Gastrocnemius medialis (tissue), 4 donors: ENCODE measurements at regions of chr10 and their contacts with region 1.

Region 1: DNA sequence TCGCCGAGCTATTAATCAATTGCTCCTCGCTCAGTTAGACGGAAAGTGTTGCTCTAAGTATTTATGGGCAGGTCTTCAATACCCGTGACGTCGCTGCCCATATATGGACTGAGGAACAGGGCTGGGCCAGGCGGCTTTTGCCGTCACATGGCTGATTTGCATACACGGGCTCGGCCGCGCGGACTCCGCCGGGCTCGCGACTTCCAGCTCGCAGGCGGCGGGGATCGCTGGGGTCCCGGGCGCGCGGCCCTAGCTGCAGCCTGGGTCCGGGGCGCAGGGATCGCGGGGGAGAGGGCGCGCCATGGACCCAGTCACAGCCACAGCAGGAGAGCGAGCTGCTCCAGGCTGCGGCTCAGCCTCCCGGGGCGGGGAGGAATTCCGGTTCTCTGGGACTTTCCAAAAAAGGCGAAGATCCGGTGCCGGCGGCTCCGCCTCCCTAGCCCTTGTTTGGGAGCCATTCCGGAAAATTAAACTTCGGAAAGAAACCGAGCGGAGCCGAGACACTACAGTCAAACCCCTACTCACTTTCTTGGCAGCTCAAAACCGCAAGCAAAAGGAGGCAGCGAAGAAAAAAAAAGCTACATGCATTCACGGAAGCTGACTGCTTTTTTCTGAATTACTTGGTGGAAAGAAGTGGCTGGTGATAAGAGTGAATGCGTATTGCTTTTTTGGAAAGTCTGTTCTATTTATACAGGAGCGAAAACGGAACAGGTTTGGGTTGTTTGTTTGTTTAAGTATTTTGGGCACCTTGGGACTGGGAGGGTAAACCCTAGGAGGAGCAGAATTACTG is at the start of gene EGR2:
- DNase-seq: peak; percentile 86 to 89
- ATAC-seq: peak; percentile 88 to 89
- H3K4me3 ChIP-seq: peak within 1 kb of the TSS; percentile 76 to 99 (median 92)
- H3K27ac ChIP-seq: peak within 1 kb of the TSS; percentile 86 to 94 (median 87)
- H3K4me1 ChIP-seq: peaks cover 15 to 32% of the 10 kb centered on the region in 2 donors
- H3K27me3 ChIP-seq: peaks cover 24 to 25% (median 24%) of the 10 kb centered on the region in 3 donors
- CTCF ChIP-seq: no peak
- POLR2A ChIP-seq: peak in 1 of 2 donors; percentile 11
- total RNA-seq, gene EGR2: 0.40 to 1.5 (median 0.76) TPM in 3 of 4 donors, not detected in the other

Region 2: DNA sequence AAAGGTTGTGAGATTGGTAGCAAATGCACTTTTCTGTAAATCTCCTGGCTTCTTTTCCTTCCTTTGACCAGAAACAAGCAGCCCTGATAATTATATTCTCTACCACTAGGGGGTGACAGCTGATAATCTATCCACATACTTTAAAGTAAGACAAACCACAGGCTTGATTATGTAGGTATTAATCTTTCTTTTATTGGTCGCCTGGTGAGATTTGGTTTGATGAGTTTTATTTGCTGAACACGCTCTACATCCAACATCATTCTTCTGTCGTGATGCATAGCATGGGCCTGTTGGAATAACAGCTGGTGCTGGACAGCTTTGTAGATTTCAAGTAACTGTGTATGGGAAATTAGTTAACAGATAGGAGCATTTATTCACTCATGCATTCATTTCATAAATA is 378.8 kb before region 1 on chr10:
- in situ Hi-C with region 1: no loop called
- intact Hi-C with region 1: loop called (anchors 1 kb)
- DNase-seq: no peak
- ATAC-seq: peak in 1 of 2 donors; percentile 60
- H3K4me3 ChIP-seq: no peak overlapping the region
- H3K27ac ChIP-seq: no peak overlapping the region
- H3K4me1 ChIP-seq: peaks cover 0 to 3% of the 10 kb centered on the region in 2 donors
- H3K27me3 ChIP-seq: no peaks in the 10 kb centered on the region
- CTCF ChIP-seq: peak; percentile 57 to 77 (median 64)
- POLR2A ChIP-seq: no peak

Region 3: DNA sequence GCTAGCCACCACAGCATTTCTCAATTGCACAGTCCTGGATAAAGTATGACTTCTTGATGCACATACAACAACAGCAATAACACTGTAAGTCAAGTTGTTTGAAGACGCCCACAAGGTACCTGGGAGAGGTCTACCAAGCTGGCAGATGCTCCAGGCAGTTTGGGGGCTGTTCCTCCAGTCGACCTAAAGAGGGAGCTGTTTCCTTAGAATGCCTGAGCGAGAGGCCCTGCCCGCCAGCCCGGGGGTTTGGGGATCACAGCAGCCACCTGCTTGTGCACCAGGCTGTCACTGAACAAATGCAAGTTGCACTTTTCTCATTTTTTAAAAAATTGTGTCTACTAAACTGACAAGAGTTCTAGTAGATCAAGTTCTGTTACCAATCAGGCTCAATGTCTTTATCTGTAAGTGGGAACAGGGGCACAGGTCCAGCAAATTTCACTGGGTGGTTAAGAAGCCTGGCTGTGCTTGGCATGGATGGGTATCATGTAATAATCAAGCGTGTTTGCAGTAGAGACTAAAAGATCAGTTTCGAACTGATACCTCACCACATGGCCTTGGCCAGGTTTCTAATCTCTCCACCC is 205.8 kb before region 1 on chr10:
- in situ Hi-C with region 1: loop called in 2 of 4 experiments (anchors 5 to 10 kb)
- intact Hi-C with region 1: loop called (anchors 5 kb)
- DNase-seq: peak in 1 of 2 donors; percentile 23
- ATAC-seq: no peak
- H3K4me3 ChIP-seq: no peak overlapping the region
- H3K27ac ChIP-seq: no peak overlapping the region
- H3K4me1 ChIP-seq: no peaks in the 10 kb centered on the region
- H3K27me3 ChIP-seq: no peaks in the 10 kb centered on the region
- CTCF ChIP-seq: peak in 4 of 5 experiments; percentile 49 to 61 (median 54)
- POLR2A ChIP-seq: no peak

Region 4: DNA sequence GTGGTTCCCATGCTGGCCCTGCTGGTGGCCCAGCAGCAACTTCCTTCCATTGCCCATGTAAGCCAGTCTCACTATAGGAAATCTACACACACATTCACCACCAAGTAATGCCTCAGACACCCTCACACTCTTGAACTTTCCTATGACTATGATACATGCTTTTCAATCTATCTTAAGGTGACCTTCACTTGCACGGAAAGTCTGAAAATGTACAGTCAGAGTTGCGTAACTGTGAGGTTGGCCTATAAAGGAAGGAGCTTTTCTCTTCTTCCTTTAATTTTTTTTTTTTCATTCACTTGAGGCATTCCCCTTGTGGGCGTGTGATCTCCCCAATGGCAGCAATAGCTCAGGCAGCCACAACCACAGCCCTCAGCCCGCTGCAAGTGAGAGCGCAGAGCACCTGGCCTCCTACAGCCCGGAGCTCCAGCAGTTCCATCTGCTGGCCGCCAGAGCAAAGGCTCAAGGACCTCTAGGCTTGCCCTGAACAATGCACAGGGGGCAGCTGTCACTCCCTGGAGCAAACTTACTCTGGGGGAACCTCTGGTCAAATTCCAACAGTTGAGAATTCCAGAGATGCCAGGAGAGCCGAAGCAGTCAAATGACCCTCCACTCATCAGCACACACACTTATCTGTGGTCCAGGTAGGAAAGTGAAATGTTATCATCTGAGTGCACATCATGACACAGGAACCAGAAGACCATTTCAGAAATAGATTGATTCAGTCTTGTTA is 135.2 kb before region 1 on chr10:
- in situ Hi-C with region 1: no loop called
- intact Hi-C with region 1: no loop called
- DNase-seq: no peak
- ATAC-seq: no peak
- H3K4me3 ChIP-seq: no peak overlapping the region
- H3K27ac ChIP-seq: no peak overlapping the region
- H3K4me1 ChIP-seq: no peaks in the 10 kb centered on the region
- H3K27me3 ChIP-seq: no peaks in the 10 kb centered on the region
- CTCF ChIP-seq: no peak
- POLR2A ChIP-seq: no peak

Region 5: GRCh38 chr10:62804356-62805230 is 11.9 kb before region 1 on chr10 and contains the start of gene ADO:
- in situ Hi-C with region 1: no loop called
- intact Hi-C with region 1: loop called (anchors 1 kb)
- DNase-seq: peak; percentile 75 to 88
- ATAC-seq: peak; percentile 93
- H3K4me3 ChIP-seq: peak within 1 kb of the TSS; percentile 69 to 86 (median 78)
- H3K27ac ChIP-seq: peak within 1 kb of the TSS; percentile 86 to 98 (median 95)
- H3K4me1 ChIP-seq: peaks cover 31 to 39% of the 10 kb centered on the region in 2 donors
- H3K27me3 ChIP-seq: peaks cover 0 to 3% (median 0%) of the 10 kb centered on the region in 3 donors
- CTCF ChIP-seq: no peak
- POLR2A ChIP-seq: peak; percentile 72 to 82
- total RNA-seq, gene ADO: 11.6 to 31.6 (median 27.1) TPM

Region 6: GRCh38 chr10:63115732-63116383 is 299.3 kb after region 1 on chr10:
- in situ Hi-C with region 1: loop called in 2 of 4 experiments (anchors 25 kb)
- intact Hi-C with region 1: loop called (anchors 1 kb)
- DNase-seq: peak; percentile 93 to 96
- ATAC-seq: peak; percentile 93 to 95
- H3K4me3 ChIP-seq: peak overlapping the region in 1 of 4 donors; percentile 6
- H3K27ac ChIP-seq: peak overlapping the region; percentile 87 to 99 (median 93)
- H3K4me1 ChIP-seq: peaks cover 30 to 32% of the 10 kb centered on the region in 2 donors
- H3K27me3 ChIP-seq: no peaks in the 10 kb centered on the region
- CTCF ChIP-seq: peak in 1 of 5 experiments; percentile 7
- POLR2A ChIP-seq: peak; percentile 51 to 56

Region 7: DNA sequence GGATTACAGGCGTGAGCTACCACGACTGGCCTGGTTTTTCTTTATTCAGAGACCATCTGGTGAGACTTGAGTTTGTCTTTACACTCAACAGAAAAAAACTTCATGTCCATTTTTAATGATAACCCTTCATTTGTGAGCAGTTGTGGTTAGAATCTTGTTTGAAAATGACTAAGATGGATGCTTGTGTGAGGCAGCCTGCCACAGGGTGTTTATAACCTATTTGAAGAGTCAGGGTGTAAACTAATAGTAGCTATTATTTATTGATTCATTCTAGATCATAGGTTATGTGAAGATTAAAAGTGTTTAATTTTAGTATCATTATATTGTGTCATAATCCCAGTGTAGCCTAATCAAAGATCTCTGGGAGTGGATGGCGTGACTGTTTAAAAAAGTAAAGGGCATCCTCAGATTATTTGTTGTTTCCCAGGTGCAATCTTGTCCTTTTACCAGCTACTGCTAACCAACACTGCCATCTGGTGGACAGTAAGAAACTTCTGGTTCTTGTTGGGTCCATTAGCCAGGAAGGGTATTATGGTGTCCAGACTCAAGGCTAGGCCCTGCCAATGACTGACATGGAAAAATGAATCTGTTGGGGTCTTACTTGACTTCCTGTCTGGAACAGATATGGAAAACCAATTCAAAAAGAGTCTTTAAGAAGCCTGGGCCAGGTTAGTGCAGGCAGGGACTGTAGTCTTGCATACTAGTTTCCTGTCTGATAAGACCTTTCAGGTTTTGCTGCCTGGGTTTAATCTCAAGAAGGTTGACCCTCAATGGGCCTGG is 341.5 kb after region 1 on chr10:
- in situ Hi-C with region 1: no loop called
- intact Hi-C with region 1: loop called (anchors 5 kb)
- DNase-seq: no peak
- ATAC-seq: peak; percentile 76 to 88
- H3K4me3 ChIP-seq: no peak overlapping the region
- H3K27ac ChIP-seq: no peak overlapping the region
- H3K4me1 ChIP-seq: peaks cover 7 to 13% of the 10 kb centered on the region in 2 donors
- H3K27me3 ChIP-seq: no peaks in the 10 kb centered on the region
- CTCF ChIP-seq: peak; percentile 80 to 84 (median 83)
- POLR2A ChIP-seq: no peak